SK-N-SH (cell line): ENCODE measurements at regions of chr11 and their contacts with region 1.

Region 1: GRCh38 chr11:14454861-14455632 is 44.6 kb downstream of the COPB1 start:
- DNase-seq: peak; percentile 39
- H3K4me3 ChIP-seq: no peak overlapping the region
- H3K27ac ChIP-seq: peak overlapping the region in 1 of 2 experiments; percentile 61; a peak in 2 of 4 replicates
- H3K4me1 ChIP-seq: no peaks in the 10 kb centered on the region
- H3K27me3 ChIP-seq: no peaks in the 10 kb centered on the region
- CTCF ChIP-seq: peak; percentile 86
- EP300 ChIP-seq: no peak
- RAD21 ChIP-seq: peak; percentile 68

Region 2: GRCh38 chr11:14308114-14308896 is 146.7 kb before region 1 on chr11:
- CTCF ChIA-PET with region 1: interaction called, 62 read pairs
- POLR2A ChIA-PET with region 1: no interaction called
- DNase-seq: peak; percentile 32
- H3K4me3 ChIP-seq: no peak overlapping the region; a peak in 1 of 4 replicates
- H3K27ac ChIP-seq: no peak overlapping the region
- H3K4me1 ChIP-seq: peaks cover 0 to 19% of the 10 kb centered on the region in 2 experiments; a peak in 1 of 4 replicates
- H3K27me3 ChIP-seq: no peaks in the 10 kb centered on the region
- CTCF ChIP-seq: peak; percentile 71
- EP300 ChIP-seq: no peak
- RAD21 ChIP-seq: peak; percentile 52

Region 3: GRCh38 chr11:14422052-14422813 is 32.8 kb before region 1 on chr11:
- CTCF ChIA-PET with region 1: interaction called, 15 read pairs
- POLR2A ChIA-PET with region 1: no interaction called
- DNase-seq: peak; percentile 69
- H3K4me3 ChIP-seq: no peak overlapping the region
- H3K27ac ChIP-seq: peak overlapping the region in 1 of 2 experiments; percentile 82; a peak in 3 of 4 replicates
- H3K4me1 ChIP-seq: peaks cover 9 to 36% of the 10 kb centered on the region in 2 experiments; a peak in 3 of 4 replicates
- H3K27me3 ChIP-seq: no peaks in the 10 kb centered on the region
- CTCF ChIP-seq: no peak
- EP300 ChIP-seq: peak; percentile 27 to 99; a peak in 3 of 4 replicates
- RAD21 ChIP-seq: no peak

Region 4: DNA sequence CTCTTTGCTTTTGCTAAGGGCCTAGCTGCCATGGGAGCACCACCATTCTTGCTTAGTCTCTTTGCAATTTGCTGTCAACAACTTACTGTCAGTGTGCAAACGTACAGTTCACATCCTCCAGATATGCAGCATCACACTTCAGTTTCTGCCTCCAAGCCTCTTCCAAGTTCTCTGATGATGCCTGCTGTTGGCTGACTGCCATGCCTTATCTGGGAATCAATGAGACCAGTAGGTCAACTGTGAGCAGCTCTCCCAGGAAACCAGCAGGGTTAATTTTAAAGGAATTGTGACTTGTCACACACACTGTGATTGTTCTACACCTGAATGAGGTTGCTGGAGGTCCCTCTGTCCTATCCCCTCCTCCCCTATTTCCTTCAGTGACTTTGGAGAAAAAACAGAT is 11.4 kb before region 1 on chr11:
- CTCF ChIA-PET with region 1: interaction called, 45 read pairs
- POLR2A ChIA-PET with region 1: no interaction called
- DNase-seq: peak; percentile 43
- H3K4me3 ChIP-seq: no peak overlapping the region
- H3K27ac ChIP-seq: peak overlapping the region in 1 of 2 experiments; percentile 89; a peak in 2 of 4 replicates
- H3K4me1 ChIP-seq: peaks cover 7 to 29% of the 10 kb centered on the region in 2 experiments; a peak in 3 of 4 replicates
- H3K27me3 ChIP-seq: no peaks in the 10 kb centered on the region
- CTCF ChIP-seq: no peak
- EP300 ChIP-seq: peak in 1 of 2 experiments; percentile 64; a peak in 1 of 4 replicates
- RAD21 ChIP-seq: no peak

Region 5: GRCh38 chr11:14471127-14471526 is 16.1 kb after region 1 on chr11:
- CTCF ChIA-PET with region 1: interaction called, 30 read pairs
- POLR2A ChIA-PET with region 1: no interaction called
- DNase-seq: no peak
- H3K4me3 ChIP-seq: no peak overlapping the region
- H3K27ac ChIP-seq: no peak overlapping the region
- H3K4me1 ChIP-seq: no peaks in the 10 kb centered on the region
- H3K27me3 ChIP-seq: no peaks in the 10 kb centered on the region
- CTCF ChIP-seq: no peak
- EP300 ChIP-seq: no peak
- RAD21 ChIP-seq: no peak